ENCODE measurements at regions of chr10 and their contacts with region 1.

Region 1: DNA sequence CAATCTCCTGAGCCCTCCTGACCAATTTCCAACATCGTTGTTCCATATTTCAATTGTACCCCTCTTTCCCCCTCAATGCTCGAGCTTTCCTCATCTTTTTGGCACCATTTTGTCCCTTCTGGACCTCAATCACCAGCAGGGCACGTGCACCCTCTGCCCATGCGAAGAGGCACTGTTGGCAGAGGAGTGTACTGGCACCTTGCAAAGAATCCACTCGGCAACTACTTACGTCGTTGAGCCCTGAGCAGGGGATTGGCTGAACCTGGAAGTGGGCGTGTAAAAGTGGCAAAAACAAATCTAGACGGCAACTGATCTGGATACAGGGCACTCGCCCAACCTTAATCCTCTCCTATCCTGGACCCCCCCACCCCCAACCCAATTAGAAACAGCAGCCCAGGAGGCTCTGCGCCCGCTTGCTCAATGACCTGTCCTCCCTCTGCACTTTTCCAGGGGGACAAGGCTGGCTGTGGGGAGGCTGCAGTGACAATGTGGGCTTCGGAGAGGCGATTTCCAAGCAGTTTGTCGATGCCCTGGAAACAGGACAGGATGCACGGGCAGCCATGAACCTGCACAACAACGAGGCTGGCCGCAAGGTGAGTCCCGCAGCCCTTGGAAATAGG is 18.8 kb downstream of the WNT8B start:
- DNase-seq: peak; percentile 88 to 95 (median 91)
- H3K4me3 ChIP-seq: peak overlapping the region; percentile 49 to 82
- H3K4me3 Mint-ChIP-seq: peak overlapping the region; percentile 75 to 92 (median 86)
- H3K27ac ChIP-seq: no peak overlapping the region
- H3K27ac Mint-ChIP-seq: peak overlapping the region in 2 of 7 donors; percentile 42 to 90
- H3K4me1 ChIP-seq: peaks cover 12% of the 10 kb centered on the region
- H3K4me1 Mint-ChIP-seq: peaks cover 3 to 19% (median 10%) of the 10 kb centered on the region in 4 donors
- H3K27me3 ChIP-seq: peaks cover 18% of the 10 kb centered on the region
- H3K27me3 Mint-ChIP-seq: peaks cover 11 to 16% of the 10 kb centered on the region in 2 donors

Region 2: DNA sequence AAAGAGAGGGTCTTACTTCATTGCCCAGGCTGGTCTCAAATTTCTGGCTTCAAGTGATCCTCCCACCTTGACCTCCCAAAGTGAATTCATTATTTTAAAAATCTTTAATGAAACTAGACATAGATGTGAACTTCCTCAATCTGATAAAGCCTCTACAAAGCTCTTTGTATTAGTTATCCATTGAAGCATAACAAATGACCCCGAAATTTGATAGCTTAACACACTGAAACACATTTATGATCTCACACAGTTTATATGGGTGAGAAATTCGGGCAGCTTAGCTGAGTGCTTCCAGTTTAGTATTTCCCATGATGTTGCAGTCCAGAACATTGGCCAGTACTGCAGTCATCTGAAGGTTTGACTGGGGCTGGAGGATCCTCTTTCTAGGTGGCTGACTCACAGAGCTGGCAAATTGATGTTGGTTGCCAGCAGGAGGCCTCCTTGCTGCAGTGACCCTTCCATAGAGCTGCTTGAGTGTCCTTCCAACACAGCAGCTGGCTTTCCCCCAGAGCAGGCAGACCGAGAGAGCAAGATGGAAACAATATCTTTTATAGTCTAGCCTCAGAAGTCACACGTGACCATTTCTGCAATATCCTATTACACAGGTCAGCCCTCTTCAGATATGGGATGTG is 35.3 kb before region 1 on chr10:
- CTCF ChIA-PET with region 1: interaction called, 11 read pairs
- POLR2A ChIA-PET with region 1: no interaction called
- intact Hi-C with region 1: no loop called
- DNase-seq: no peak
- H3K4me3 ChIP-seq: no peak overlapping the region
- H3K4me3 Mint-ChIP-seq: no peak overlapping the region
- H3K27ac ChIP-seq: no peak overlapping the region
- H3K27ac Mint-ChIP-seq: no peak overlapping the region
- H3K4me1 ChIP-seq: no peaks in the 10 kb centered on the region
- H3K4me1 Mint-ChIP-seq: no peaks in the 10 kb centered on the region
- H3K27me3 ChIP-seq: no peaks in the 10 kb centered on the region
- H3K27me3 Mint-ChIP-seq: peaks cover 0 to 3% of the 10 kb centered on the region in 2 donors

Region 3: GRCh38 chr10:100529475-100530298 is 48.1 kb after region 1 on chr10 and contains the start of gene NDUFB8:
- CTCF ChIA-PET with region 1: interaction called, 31 read pairs
- POLR2A ChIA-PET with region 1: interaction called, 4 read pairs
- intact Hi-C with region 1: no loop called
- DNase-seq: peak; percentile 85 to 89 (median 86)
- H3K4me3 ChIP-seq: peak within 1 kb of the TSS; percentile 87 to 100
- H3K4me3 Mint-ChIP-seq: peak within 1 kb of the TSS; percentile 85 to 100 (median 100)
- H3K27ac ChIP-seq: peak within 1 kb of the TSS; percentile 90
- H3K27ac Mint-ChIP-seq: peak within 1 kb of the TSS; percentile 79 to 100 (median 99)
- H3K4me1 ChIP-seq: peaks cover 34% of the 10 kb centered on the region
- H3K4me1 Mint-ChIP-seq: peaks cover 21 to 45% (median 30%) of the 10 kb centered on the region in 4 donors
- H3K27me3 ChIP-seq: no peaks in the 10 kb centered on the region
- H3K27me3 Mint-ChIP-seq: no peaks in the 10 kb centered on the region
- total RNA-seq, gene NDUFB8: 141 to 162 TPM